Endothelial cell of umbilical vein (primary cell): ENCODE measurements at regions of chr7 and their contacts with region 1.

Region 1: DNA sequence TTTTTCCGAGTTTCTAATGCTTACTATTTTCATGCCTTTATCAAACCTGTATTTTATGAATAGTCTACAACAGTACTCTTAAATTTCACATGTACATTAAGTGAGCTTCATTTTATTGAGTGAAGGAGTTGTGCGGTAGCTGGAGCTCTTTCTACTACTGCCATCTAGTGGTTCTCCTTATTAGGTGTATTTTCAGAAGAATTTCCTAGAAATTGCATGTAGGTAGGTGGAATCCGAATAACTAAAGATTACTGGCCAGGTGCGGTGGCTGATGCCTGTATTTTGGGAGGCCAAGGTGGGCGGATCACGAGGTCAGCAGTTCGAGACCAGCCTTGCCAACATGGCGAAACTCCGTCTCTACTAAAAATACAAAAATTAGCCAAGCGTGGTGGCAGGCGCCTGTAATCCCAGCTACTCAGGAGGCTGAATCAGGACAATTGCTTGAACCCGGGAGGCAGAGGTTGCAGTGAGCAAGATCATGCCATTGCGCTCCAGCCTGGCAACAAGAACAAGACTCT is 38.3 kb downstream of the LRRC72 start:
- DNase-seq: peak; percentile 64
- H3K4me3 ChIP-seq: no peak overlapping the region
- H3K27ac ChIP-seq: no peak overlapping the region
- H3K4me1 ChIP-seq: peaks cover 6% of the 10 kb centered on the region
- H3K27me3 ChIP-seq: no peaks in the 10 kb centered on the region
- CTCF ChIP-seq: peak; percentile 42 to 61
- POLR2A ChIP-seq: no peak

Region 2: DNA sequence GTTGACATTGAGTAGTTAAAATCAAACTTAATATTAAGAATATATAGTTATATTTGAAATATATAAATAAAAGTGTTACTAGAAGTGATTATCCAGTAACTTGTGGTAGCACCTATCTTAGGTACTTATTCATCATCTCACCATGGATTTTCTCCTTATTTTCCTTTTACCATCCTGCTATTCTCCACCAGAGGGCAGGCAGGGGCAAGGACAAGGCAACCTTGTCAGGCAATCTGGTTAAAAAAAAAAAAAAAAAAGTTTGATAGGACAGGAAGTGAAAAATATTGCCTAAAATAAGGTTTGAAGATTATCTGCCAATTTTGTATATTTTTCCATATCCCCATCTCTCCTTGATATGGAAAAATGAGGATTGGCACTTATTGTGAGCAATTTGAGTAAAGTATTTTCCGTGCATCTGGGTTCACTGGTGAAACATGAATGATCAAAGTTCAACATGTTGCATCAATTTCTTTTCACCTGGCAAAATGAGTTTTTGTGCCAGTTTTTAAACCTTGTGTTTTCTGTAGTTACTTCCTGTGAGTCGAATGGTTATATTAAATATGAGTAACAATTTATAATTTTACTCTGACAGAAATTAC is 1259.9 kb before region 1 on chr7:
- CTCF ChIA-PET with region 1: interaction called, 10 read pairs
- POLR2A ChIA-PET with region 1: no interaction called
- dilution Hi-C with region 1: no loop called
- intact Hi-C with region 1: loop called (anchors 10 kb)
- DNase-seq: peak; percentile 65
- H3K4me3 ChIP-seq: no peak overlapping the region
- H3K27ac ChIP-seq: no peak overlapping the region
- H3K4me1 ChIP-seq: no peaks in the 10 kb centered on the region
- H3K27me3 ChIP-seq: no peaks in the 10 kb centered on the region
- CTCF ChIP-seq: peak; percentile 61 to 66
- POLR2A ChIP-seq: no peak

Region 3: DNA sequence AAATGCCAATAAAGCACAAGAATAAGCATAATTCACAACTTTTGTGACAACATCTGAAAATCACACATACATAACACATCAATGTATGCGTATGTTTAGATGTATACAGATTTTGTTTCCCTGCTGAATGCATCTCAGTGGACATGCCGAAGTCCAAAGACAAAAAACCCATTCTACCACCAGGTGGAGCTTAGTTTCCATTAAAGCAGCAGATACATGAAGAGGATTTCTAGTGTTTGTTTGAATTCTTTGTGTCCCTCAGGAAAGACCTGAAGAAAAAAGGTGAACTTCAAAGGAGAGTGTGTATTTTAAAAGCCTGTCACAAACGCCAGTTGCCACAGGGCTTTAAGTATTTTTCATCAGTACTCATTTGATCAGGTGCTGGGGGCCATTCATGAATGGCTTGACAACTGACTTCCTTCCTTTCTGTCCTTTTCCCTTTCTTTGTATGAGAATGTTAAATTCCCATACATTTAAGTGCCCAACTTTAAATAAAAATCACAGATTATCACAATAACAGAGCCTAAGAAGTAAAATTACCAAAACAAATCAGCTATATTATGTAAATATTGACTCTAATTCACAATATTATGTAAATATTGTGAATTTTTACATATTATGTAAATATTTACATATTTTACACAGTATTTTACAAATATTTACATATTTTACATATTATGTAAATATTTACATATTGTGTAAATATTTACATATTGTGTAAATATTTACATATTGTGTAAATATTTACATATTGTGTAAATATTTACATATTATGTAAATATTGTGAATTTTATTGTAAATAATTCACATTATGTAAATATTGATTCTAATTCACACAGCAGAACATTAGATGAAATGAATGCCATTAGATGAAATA is 486.7 kb before region 1 on chr7:
- CTCF ChIA-PET with region 1: interaction called, 74 read pairs
- POLR2A ChIA-PET with region 1: no interaction called
- dilution Hi-C with region 1: no loop called
- intact Hi-C with region 1: loop called (anchors 1 kb)
- DNase-seq: peak; percentile 84
- H3K4me3 ChIP-seq: no peak overlapping the region
- H3K27ac ChIP-seq: peak overlapping the region; percentile 49
- H3K4me1 ChIP-seq: peaks cover 7% of the 10 kb centered on the region
- H3K27me3 ChIP-seq: no peaks in the 10 kb centered on the region
- CTCF ChIP-seq: peak; percentile 54 to 60
- POLR2A ChIP-seq: no peak

Region 4: GRCh38 chr7:16114633-16115032 is 450.3 kb before region 1 on chr7:
- CTCF ChIA-PET with region 1: interaction called, 80 read pairs
- POLR2A ChIA-PET with region 1: no interaction called
- dilution Hi-C with region 1: no loop called
- intact Hi-C with region 1: loop called (anchors 1 kb)
- DNase-seq: peak; percentile 53
- H3K4me3 ChIP-seq: no peak overlapping the region
- H3K27ac ChIP-seq: no peak overlapping the region
- H3K4me1 ChIP-seq: no peaks in the 10 kb centered on the region
- H3K27me3 ChIP-seq: no peaks in the 10 kb centered on the region
- CTCF ChIP-seq: peak; percentile 17 to 25
- POLR2A ChIP-seq: no peak

Region 5: GRCh38 chr7:16420649-16421332 is 144.2 kb before region 1 on chr7:
- CTCF ChIA-PET with region 1: interaction called, 15 read pairs
- POLR2A ChIA-PET with region 1: no interaction called
- dilution Hi-C with region 1: no loop called
- intact Hi-C with region 1: no loop called
- DNase-seq: peak; percentile 92
- H3K4me3 ChIP-seq: peak overlapping the region; percentile 50 to 66 (median 54)
- H3K27ac ChIP-seq: peak overlapping the region; percentile 82
- H3K4me1 ChIP-seq: peaks cover 13% of the 10 kb centered on the region
- H3K27me3 ChIP-seq: no peaks in the 10 kb centered on the region
- CTCF ChIP-seq: peak in 1 of 2 donors; percentile 38
- POLR2A ChIP-seq: peak; percentile 88

Region 6: DNA sequence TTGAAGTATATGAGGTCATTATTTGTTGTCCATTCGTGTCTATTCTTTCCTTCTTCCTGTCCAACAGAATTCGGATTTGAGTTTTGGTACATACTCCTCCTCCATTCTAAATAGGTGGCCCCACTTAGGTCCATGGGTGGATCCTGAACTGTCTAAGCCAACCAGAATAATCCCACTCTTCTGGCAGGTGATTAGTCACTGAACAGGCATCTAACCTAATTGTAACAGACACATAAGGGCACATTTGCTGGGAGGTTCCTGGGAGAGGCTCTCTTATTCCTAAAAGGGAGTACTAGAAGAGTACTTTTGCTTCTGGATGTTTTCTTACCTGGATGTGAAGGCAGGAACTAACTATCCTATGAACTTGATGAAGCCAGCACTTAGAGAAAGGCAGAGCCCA is 21.5 kb before region 1 on chr7:
- CTCF ChIA-PET with region 1: interaction called, 85 read pairs
- POLR2A ChIA-PET with region 1: no interaction called
- dilution Hi-C with region 1: no loop called
- intact Hi-C with region 1: no loop called
- DNase-seq: no peak
- H3K4me3 ChIP-seq: no peak overlapping the region
- H3K27ac ChIP-seq: no peak overlapping the region
- H3K4me1 ChIP-seq: no peaks in the 10 kb centered on the region
- H3K27me3 ChIP-seq: peaks cover 0 to 2% of the 10 kb centered on the region in 2 experiments
- CTCF ChIP-seq: no peak
- POLR2A ChIP-seq: no peak

Region 7: DNA sequence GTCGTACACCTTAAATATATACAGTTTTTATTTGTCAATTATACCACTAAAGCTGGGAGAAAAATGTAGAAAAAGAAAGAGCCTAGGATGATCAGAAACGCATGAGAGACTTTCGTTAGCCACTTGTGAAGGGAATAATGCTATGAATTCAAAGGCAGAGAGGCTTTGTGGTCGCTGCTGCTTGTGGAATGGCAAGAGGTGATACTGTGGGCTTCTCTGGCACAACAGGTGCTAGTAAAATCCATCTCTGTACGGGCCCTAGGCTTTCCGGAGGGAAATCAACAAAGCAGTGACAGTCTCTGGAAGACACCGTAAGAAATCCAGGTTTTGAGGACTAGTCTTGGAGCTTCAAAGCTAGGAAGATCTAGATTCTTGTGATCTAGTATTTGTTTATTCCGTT is 14.2 kb after region 1 on chr7:
- CTCF ChIA-PET with region 1: interaction called, 20 read pairs
- POLR2A ChIA-PET with region 1: no interaction called
- dilution Hi-C with region 1: no loop called
- intact Hi-C with region 1: no loop called
- DNase-seq: no peak
- H3K4me3 ChIP-seq: no peak overlapping the region
- H3K27ac ChIP-seq: no peak overlapping the region
- H3K4me1 ChIP-seq: no peaks in the 10 kb centered on the region
- H3K27me3 ChIP-seq: no peaks in the 10 kb centered on the region
- CTCF ChIP-seq: no peak
- POLR2A ChIP-seq: no peak

Region 8: DNA sequence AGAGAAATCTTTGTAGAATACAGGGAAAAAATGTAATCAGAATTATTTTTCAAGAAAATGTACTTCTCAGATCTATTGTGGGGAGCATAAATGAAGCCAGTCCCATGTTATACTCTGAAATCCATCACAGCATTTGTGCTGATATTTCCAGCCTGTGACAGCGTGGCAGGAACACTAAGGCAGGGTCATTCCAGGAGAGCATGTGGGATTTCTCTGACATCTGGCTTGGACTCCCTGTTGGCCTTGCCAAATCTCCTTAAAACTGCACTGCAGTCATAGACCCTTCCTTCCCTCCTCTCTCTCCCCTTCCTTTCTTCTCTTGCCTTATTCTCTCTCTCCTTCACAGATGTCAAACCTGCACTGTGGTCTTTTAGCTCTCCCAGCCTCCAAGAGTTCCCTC is 182.1 kb after region 1 on chr7:
- CTCF ChIA-PET with region 1: no interaction called
- POLR2A ChIA-PET with region 1: no interaction called
- dilution Hi-C with region 1: no loop called
- intact Hi-C with region 1: no loop called
- DNase-seq: no peak
- H3K4me3 ChIP-seq: no peak overlapping the region
- H3K27ac ChIP-seq: no peak overlapping the region
- H3K4me1 ChIP-seq: peaks cover 18% of the 10 kb centered on the region
- H3K27me3 ChIP-seq: no peaks in the 10 kb centered on the region
- CTCF ChIP-seq: no peak
- POLR2A ChIP-seq: no peak